HEK293 (cell line): ENCODE measurements at regions of chr19 and their contacts with region 1.

Region 1: GRCh38 chr19:4375164-4376027 is 25.0 kb downstream of the SH3GL1 start:
- H3K4me3 ChIP-seq: no peak overlapping the region
- H3K27ac ChIP-seq: no peak overlapping the region; the same call in 1 of the 2 replicates
- H3K4me1 ChIP-seq: peaks cover 9% of the 10 kb centered on the region
- CTCF ChIP-seq: peak; percentile 88

Region 2: DNA sequence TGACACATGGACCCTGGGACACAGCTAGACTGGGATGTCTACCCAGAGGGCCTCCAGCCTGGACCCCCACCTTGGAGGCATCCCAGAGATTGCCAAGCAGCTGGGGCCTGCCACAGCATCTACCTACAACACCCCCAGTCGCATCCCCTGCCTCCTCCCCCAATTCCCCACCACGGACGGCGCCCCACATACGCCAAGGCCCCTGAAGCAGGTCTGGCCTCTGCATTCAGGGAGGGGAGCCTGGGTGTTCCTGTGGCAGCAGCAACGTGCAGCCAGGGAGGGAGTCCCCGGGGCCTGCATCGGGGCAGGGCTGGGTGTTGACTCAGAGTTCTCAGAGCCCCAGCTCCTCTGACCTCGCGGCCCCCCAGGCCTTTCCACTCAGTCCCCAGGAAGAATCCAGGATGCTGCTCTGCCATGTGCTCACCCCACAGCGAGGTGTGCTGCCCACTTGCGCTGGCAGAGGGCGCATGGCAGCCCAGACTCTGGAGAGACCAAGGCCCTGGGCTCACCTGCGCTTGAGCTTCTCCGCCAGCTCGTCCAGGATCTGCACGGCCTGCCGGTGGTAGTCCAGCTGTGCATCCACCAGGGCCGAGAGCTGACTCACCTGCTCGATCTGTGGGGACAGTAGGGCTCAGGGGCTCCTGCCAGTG is 12.4 kb before region 1 on chr19:
- CTCF ChIA-PET with region 1: interaction called, 11 read pairs
- POLR2A ChIA-PET with region 1: interaction called, 15 read pairs
- H3K4me3 ChIP-seq: no peak overlapping the region
- H3K27ac ChIP-seq: no peak overlapping the region
- H3K4me1 ChIP-seq: no peaks in the 10 kb centered on the region
- CTCF ChIP-seq: peak; percentile 59